Mucosa of descending colon (tissue), 3 donors: ENCODE measurements at regions of chr1 and their contacts with region 1.

Region 1: DNA sequence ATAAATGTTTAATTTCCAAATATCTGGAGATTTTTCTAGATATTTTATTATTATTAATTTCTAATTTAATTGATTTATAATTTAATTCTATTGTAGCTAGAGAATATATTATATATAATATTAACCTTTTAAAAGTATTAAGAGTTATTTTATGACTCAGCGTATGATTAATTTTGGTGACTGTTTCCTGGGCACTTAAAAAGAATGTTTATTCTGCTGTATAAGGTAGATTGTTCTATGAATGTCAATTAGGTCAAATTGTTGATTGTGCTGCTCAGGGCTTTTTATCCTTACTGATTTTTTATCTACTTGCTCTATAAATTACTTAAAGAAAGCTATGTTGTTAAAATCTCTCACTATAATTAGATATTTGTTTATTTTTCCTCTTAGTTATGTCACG is 20.1 kb upstream of the GJA8 start:
- DNase-seq: no peak
- ATAC-seq: no peak
- H3K4me3 ChIP-seq: no peak overlapping the region
- H3K4me1 ChIP-seq: no peaks in the 10 kb centered on the region
- CTCF ChIP-seq: no peak

Region 2: DNA sequence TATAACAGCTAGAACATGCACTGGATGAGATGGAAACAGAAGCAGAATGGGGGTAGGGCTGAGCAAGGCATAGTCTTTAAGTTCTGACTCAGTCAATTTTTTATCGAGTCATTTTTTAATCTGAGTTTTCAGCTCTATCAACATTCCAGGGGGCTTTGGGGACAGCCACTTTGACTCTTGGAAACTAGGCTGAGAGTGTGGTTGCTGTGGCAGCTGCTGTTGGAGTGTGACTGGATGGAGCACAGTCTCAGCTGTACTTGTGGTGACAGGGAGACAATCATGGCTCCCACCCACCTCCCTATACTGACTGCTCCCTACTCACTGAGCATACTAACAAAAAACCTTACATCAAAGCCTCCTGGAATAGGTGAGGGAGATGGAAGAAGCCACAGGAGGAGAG is 147.1 kb before region 1 on chr1:
- intact Hi-C with region 1: loop called in 1 of 2 experiments (anchors 10 kb)
- DNase-seq: no peak
- ATAC-seq: no peak
- H3K4me3 ChIP-seq: no peak overlapping the region
- H3K4me1 ChIP-seq: no peaks in the 10 kb centered on the region
- CTCF ChIP-seq: no peak

Region 3: GRCh38 chr1:148388260-148389027 is 505.9 kb after region 1 on chr1:
- intact Hi-C with region 1: no loop called
- DNase-seq: peak; percentile 90 to 96 (median 92)
- ATAC-seq: peak; percentile 98
- H3K4me3 ChIP-seq: peak overlapping the region; percentile 17
- H3K4me1 ChIP-seq: no peaks in the 10 kb centered on the region
- CTCF ChIP-seq: no peak